ENCODE measurements at regions of chr1 and their contacts with region 1.

Region 1: GRCh38 chr1:23376890-23377811 is 7.5 kb upstream of the ZNF436 start:
- DNase-seq: peak; percentile 86
- H3K27ac ChIP-seq: peak overlapping the region; percentile 97
- CTCF ChIP-seq: no peak

Region 2: GRCh38 chr1:23249787-23250454 is 127.2 kb before region 1 on chr1:
- CTCF ChIA-PET with region 1: no interaction called
- POLR2A ChIA-PET with region 1: no interaction called
- DNase-seq: no peak
- H3K27ac ChIP-seq: no peak overlapping the region
- CTCF ChIP-seq: no peak

Region 3: DNA sequence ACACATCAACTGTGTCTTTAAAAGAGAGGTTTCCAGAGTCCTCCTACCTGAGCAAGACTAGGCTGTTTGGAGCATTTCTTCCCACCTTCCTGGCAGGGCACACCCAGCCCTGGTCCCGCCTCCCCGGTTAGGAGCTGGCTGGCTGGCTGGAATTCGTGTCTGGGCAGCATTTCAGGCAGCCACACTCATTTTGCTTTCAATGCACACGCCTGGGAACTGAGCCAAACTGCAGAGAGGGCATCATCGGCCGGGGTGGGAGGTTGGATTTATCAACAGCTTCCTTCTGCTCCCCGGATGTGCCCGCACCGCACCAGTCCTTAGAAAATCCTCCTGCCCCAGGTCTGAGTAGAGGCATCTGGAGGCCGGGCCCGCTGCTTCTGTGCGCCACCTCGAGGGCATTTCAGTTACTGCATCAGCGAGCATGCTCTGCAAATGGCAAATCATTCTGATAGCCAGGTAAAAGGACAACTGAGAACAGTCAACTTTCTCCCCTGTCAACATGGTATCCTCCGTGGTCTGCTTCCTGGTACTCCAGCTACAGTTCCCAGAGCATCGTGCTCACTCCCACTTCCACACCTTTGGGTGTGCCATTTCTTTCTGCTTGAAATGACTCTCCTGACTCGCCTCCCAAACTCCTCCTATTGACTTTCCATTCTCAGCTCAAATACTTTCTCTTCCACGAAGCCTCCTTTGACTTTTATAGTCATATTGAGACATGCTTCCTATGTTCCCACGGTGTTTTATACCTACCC is 26.8 kb after region 1 on chr1:
- CTCF ChIA-PET with region 1: interaction called, 13 read pairs
- POLR2A ChIA-PET with region 1: interaction called, 5 read pairs
- DNase-seq: peak; percentile 98
- H3K27ac ChIP-seq: peak overlapping the region; percentile 87
- CTCF ChIP-seq: peak; percentile 97

Measured in RWPE1 (cell line).